Psoas muscle (tissue), 8 donors: ENCODE measurements at regions of chr13 and their contacts with region 1.

Region 1: GRCh38 chr13:60396783-60397703 is at the start of gene TDRD3:
- DNase-seq: peak; percentile 86 to 92
- ATAC-seq: peak; percentile 87 to 90 (median 88)
- H3K4me3 ChIP-seq: peak within 1 kb of the TSS; percentile 72
- H3K27ac ChIP-seq: peak within 1 kb of the TSS; percentile 92
- H3K4me1 ChIP-seq: peaks cover 25% of the 10 kb centered on the region
- H3K27me3 ChIP-seq: no peaks in the 10 kb centered on the region
- CTCF ChIP-seq: peak; percentile 68
- total RNA-seq, gene TDRD3: 29.1 to 39.7 (median 35.9) TPM

Region 2: DNA sequence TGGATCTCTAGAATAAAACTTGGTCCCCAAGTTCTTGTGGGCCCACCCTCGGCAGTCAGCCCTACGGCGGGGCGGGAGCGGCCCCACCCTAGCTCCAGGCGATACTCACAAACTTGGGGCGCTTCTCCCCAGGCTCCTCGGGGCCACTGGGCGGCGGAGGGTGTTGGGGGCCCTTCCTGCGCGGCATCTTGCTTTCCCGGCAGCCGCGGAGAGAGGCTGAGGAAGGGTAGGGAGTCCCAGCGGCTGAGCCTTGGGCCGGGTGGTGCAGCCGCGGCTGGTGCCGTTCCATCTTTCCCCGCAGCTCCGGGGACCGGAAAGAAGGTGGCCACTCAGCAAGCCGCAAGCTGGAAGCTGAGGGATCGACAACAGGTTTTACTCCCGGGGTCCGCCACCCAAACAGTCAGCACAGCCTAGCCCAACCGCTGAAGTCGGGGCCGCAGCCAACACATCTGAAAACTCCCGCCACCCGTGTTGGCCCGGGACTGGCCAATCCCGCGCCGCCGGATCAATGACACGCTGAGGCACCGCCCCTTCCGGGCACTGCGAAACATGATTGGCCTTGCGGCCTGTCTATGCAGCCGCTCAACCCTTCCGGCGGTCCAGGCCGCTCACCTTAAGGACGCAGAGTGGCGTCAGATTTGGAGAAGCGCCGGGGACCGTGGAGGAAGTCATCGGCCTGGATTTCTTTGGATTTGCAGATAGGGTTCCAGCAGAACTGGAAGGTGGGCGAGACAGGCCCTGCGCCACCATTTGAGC is 233.4 kb before region 1 on chr13 and contains the start of gene DIAPH3:
- intact Hi-C with region 1: loop called (anchors 10 kb)
- DNase-seq: peak; percentile 96 to 97
- ATAC-seq: peak; percentile 100
- H3K4me3 ChIP-seq: peak within 1 kb of the TSS; percentile 73
- H3K27ac ChIP-seq: peak within 1 kb of the TSS; percentile 72
- H3K4me1 ChIP-seq: peaks cover 7% of the 10 kb centered on the region
- H3K27me3 ChIP-seq: peaks cover 0 to 5% (median 0%) of the 10 kb centered on the region in 3 donors
- CTCF ChIP-seq: no peak
- total RNA-seq, gene DIAPH3: 0.08 to 0.10 TPM in 2 of 4 donors, not detected in the others

Region 3: DNA sequence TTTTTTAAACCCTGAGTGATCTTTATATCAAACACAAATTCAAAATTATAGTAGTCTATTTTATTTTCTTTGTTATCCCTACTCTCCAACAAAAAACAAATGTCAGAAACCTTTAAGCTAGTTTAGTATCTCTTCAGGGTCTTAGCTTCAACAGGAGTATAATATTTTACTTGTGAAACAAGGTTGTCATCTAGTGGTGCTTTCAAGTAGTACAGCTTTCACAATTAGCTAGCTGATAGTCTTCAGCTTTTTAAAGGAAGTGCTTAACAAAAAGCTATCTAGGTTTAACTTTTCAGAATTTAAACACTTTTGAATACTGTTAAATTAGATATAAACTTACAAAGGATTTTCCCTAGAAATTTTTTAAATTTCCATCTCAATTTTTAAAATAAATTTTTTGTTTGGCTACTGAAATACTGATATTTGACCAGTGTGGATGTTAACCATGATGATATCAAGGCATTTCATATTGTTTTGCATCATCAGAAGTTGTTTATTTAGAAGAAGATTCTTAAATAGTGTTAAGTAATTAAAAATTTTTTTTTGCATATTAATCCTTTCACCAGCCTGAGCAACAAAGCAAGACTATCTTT is 34.2 kb after region 1 on chr13:
- intact Hi-C with region 1: loop called in 1 of 2 experiments (anchors 5 kb)
- DNase-seq: no peak
- ATAC-seq: peak; percentile 73 to 93 (median 83)
- H3K4me3 ChIP-seq: no peak overlapping the region
- H3K27ac ChIP-seq: no peak overlapping the region
- H3K4me1 ChIP-seq: no peaks in the 10 kb centered on the region
- H3K27me3 ChIP-seq: no peaks in the 10 kb centered on the region
- CTCF ChIP-seq: peak; percentile 97

Region 4: DNA sequence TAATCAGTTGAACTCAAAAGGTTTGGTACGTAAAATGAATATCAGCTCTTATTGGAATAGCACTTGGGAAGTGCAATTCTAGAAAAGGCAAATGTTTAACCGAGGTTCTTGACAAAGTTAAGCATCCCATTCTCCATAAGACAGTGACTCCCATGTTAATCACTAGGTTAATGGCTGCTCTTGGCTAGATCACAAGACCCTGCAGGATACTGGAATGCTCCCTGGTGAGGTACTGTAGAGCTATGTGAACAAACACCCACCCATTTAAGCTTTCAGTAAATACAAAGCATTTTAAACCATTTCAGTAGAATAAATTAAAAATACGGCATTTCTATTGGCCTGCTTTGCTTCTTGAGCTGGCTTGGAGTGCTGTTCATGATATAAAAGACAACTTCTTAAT is 56.4 kb after region 1 on chr13:
- intact Hi-C with region 1: no loop called
- DNase-seq: no peak
- ATAC-seq: no peak
- H3K4me3 ChIP-seq: no peak overlapping the region
- H3K27ac ChIP-seq: no peak overlapping the region
- H3K4me1 ChIP-seq: no peaks in the 10 kb centered on the region
- H3K27me3 ChIP-seq: no peaks in the 10 kb centered on the region
- CTCF ChIP-seq: no peak